ENCODE measurements at regions of chr19 and their contacts with region 1.

Region 1: DNA sequence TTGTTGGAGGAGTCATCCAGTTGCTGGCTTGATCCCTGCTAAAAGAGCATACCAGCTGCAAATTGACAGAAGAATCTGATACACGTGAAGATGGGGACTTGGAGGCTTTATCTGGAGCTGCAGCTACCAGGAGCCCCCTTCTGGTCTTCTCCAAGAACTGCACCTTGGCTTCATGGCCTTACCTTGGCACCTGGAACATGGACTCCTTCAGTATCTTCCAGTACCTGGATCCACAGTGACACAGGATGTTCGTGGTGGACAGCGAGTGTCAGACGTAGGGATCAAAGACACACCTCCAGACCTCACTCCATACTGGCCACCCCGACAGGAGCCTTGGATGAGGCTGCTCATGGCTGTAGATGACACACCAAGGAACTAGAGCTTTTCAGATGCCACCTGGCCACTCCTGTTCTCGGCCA is 9.9 kb upstream of the ACSBG2 start:
- DNase-seq: peak; percentile 75
- ATAC-seq: peak; percentile 85
- H3K4me3 Mint-ChIP-seq: no peak overlapping the region
- H3K27ac Mint-ChIP-seq: no peak overlapping the region
- H3K4me1 Mint-ChIP-seq: peaks cover 2% of the 10 kb centered on the region
- H3K27me3 Mint-ChIP-seq: peaks cover 2% of the 10 kb centered on the region

Region 2: DNA sequence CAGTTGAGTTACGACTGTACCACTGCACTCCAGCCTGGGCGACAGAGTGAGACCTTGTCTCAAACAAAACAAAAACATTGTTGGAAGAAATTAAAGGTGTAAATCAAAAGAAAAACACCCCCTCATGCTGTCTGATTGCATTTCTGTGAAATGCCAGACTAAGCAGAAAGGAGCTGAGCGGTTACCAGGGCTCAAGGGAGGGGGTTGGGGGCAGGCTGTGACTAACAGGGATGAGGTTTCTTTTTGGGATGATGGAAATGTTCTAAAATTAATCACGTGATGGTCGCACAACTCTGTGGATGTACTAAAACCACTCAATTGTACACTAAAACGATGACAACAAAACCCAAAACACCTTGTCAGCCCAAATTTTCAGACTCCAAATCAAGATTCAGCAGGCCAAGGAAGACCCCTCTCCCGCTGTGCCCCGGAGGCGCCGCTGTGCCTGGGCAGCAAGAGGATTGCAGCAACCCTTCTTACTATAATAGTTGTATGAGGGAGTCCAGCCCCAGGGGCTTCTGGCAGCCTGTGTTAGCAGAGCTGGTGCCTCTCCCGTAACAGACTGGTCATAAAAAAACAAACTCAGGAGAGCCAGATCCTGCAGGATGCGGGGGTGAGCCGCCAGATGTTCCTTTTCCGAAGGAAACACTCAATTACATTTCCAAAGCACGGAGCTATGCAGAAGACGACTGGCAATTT is 190.7 kb before region 1 on chr19:
- CTCF ChIA-PET with region 1: no interaction called
- POLR2A ChIA-PET with region 1: no interaction called
- DNase-seq: no peak
- ATAC-seq: no peak
- H3K4me3 Mint-ChIP-seq: no peak overlapping the region
- H3K27ac Mint-ChIP-seq: no peak overlapping the region
- H3K4me1 Mint-ChIP-seq: no peaks in the 10 kb centered on the region
- H3K27me3 Mint-ChIP-seq: no peaks in the 10 kb centered on the region

Region 3: GRCh38 chr19:5987077-5987818 is 138.3 kb before region 1 on chr19:
- CTCF ChIA-PET with region 1: interaction called, 12 read pairs
- POLR2A ChIA-PET with region 1: no interaction called
- DNase-seq: peak; percentile 83
- ATAC-seq: peak; percentile 57
- H3K4me3 Mint-ChIP-seq: peak overlapping the region; percentile 67
- H3K27ac Mint-ChIP-seq: peak overlapping the region; percentile 66
- H3K4me1 Mint-ChIP-seq: peaks cover 48% of the 10 kb centered on the region
- H3K27me3 Mint-ChIP-seq: no peaks in the 10 kb centered on the region

Region 4: DNA sequence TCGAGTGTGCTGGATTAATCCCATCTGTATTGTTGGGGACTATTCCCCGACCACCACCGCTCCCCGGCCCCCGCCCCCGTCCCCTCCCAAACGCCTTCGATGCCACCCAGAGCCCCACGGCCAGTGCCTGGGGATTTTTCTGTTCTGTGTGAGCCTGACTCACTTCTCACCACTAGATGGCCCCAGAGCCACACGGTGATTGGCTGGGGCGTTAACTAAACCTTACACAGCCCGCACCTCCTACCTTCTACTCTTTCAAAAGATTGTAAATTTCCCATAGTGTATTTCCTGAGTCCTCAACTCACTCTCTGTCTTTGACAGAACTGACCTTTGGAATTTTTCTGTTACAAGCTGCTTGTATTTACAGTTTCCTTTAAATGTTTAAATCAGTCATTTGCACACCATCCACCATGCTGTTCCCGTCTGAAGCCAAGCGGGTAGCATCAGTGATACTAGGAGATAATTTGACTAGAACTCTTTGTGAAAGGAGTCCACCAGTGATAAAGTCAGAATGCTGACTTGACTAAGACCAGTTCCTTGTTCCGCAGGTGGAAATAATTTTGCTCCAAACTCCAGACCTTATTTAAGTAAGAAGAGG is 76.7 kb before region 1 on chr19:
- CTCF ChIA-PET with region 1: interaction called, 142 read pairs
- POLR2A ChIA-PET with region 1: no interaction called
- DNase-seq: peak; percentile 82
- ATAC-seq: peak; percentile 99
- H3K4me3 Mint-ChIP-seq: no peak overlapping the region
- H3K27ac Mint-ChIP-seq: no peak overlapping the region
- H3K4me1 Mint-ChIP-seq: peaks cover 5% of the 10 kb centered on the region
- H3K27me3 Mint-ChIP-seq: peaks cover 5% of the 10 kb centered on the region

Region 5: DNA sequence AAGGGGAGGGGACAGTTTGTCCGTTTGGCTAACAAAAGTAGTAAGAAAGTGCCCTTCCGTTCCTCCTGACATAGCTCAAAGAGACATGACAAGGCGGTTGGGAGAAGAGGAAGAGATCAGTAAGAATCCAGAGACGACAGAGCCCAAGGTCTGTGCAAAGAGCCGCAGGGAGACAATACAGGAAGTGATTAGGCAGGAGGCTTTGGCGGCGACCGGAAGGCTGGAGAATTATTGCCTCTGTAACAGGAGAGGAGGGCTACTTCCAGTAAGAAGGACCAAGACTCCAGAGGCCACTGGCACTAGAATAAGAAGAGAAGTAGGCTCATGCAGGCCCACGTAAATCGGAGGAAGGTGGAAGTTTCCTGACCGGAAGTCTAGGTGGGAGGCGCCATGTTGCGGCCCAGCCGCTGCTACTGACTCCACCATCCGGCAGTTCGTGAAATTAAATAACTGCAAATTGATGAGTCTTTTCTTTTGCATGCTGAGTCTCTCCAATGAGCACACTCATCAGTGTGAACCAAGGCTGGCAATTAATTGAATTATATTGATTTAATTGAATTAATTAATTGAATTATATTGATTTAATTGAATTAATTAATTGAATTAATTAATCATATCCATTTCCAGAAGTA is 25.2 kb before region 1 on chr19:
- CTCF ChIA-PET with region 1: interaction called, 16 read pairs
- POLR2A ChIA-PET with region 1: no interaction called
- DNase-seq: peak; percentile 61
- ATAC-seq: peak; percentile 61
- H3K4me3 Mint-ChIP-seq: peak overlapping the region; percentile 62
- H3K27ac Mint-ChIP-seq: peak overlapping the region; percentile 85
- H3K4me1 Mint-ChIP-seq: peaks cover 16% of the 10 kb centered on the region
- H3K27me3 Mint-ChIP-seq: no peaks in the 10 kb centered on the region

Region 6: GRCh38 chr19:6218491-6219162 is 93.0 kb after region 1 on chr19:
- CTCF ChIA-PET with region 1: interaction called, 15 read pairs
- POLR2A ChIA-PET with region 1: no interaction called
- DNase-seq: peak; percentile 90
- ATAC-seq: peak; percentile 80
- H3K4me3 Mint-ChIP-seq: no peak overlapping the region
- H3K27ac Mint-ChIP-seq: peak overlapping the region; percentile 67
- H3K4me1 Mint-ChIP-seq: no peaks in the 10 kb centered on the region
- H3K27me3 Mint-ChIP-seq: no peaks in the 10 kb centered on the region

Measured in activated CD8-positive, alpha-beta T cell treated with anti-CD3 and anti-CD28 coated beads, Interleukin-2, amount 10 ng/mL, durations not matched to agents 7 days and 5 days (primary cell).